CD4-positive, alpha-beta T cell (primary cell): ENCODE measurements at regions of chr5 and their contacts with region 1.

Region 1: DNA sequence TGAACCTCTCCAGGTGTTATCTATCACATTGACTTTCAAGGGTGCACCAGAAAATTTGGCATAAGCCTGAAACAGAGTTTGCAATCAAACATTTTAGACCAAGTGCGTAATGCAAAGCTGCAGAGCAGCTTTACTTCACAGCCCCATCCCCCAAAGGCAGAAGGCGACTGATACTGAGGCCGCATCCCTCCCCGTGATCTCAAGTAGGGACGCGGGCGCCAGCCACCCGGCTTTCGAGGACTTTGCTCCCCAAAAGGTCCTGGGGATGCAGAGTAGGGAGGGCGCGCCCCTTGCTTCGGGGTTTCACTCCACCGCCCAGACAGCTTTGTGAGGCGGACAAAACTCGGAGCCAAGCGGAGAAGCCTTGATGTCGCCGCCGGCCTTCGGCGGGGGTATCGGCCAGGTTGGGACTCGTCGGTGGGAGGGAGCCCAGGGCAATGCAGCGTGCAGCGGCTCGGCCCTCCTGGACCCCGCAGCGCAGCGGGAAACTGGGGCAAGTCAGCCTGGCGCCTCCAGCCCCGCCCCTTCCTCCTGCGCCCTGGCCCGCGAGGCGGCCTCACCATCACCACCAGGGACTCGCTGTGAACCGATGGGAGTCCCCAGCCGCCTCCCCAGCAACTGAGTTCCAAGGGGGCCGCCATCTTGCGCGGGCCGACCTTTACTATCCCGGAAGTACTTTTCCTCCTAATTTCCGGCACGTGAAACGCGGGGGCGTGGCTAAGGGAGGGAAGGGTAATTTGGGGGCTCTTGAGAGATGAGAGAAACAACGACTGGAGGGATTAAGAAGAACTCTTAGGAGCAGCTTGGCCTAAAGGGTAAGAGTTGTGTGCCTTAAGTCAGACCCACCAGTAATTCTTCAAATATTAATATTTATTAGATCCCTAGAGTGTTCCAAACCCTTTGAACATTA is at the start of gene MTX3:
- DNase-seq: peak; percentile 75 to 94 (median 83)
- ATAC-seq: peak; percentile 95
- H3K4me3 ChIP-seq: peak within 1 kb of the TSS; percentile 85
- H3K4me3 Mint-ChIP-seq: peak within 1 kb of the TSS; percentile 88
- H3K27ac ChIP-seq: peak within 1 kb of the TSS; percentile 59 to 68
- H3K27ac Mint-ChIP-seq: peak within 1 kb of the TSS; percentile 92
- H3K4me1 ChIP-seq: peaks cover 17% of the 10 kb centered on the region
- H3K4me1 Mint-ChIP-seq: peaks cover 18% of the 10 kb centered on the region
- H3K27me3 ChIP-seq: no peaks in the 10 kb centered on the region
- H3K27me3 Mint-ChIP-seq: peaks cover 12% of the 10 kb centered on the region
- CTCF ChIP-seq: no peak
- total RNA-seq, gene MTX3: 25.6 to 26.5 TPM

Region 2: GRCh38 chr5:80399526-80400239 is 408.8 kb after region 1 on chr5:
- CTCF ChIA-PET with region 1: no interaction called
- POLR2A ChIA-PET with region 1: no interaction called
- intact Hi-C with region 1: loop called in 1 of 2 experiments (anchors 5 kb)
- DNase-seq: peak in 3 of 14 experiments; percentile 25 to 68 (median 55)
- ATAC-seq: no peak
- H3K4me3 ChIP-seq: no peak overlapping the region
- H3K4me3 Mint-ChIP-seq: no peak overlapping the region
- H3K27ac ChIP-seq: no peak overlapping the region
- H3K27ac Mint-ChIP-seq: no peak overlapping the region
- H3K4me1 ChIP-seq: no peaks in the 10 kb centered on the region
- H3K4me1 Mint-ChIP-seq: no peaks in the 10 kb centered on the region
- H3K27me3 ChIP-seq: no peaks in the 10 kb centered on the region
- H3K27me3 Mint-ChIP-seq: peaks cover 13% of the 10 kb centered on the region
- CTCF ChIP-seq: no peak